ENCODE measurements at regions of chr1 and their contacts with region 1.

Region 1: GRCh38 chr1:235415008-235415904 is 48.0 kb downstream of the TBCE start:
- DNase-seq: peak; percentile 85
- ATAC-seq: peak; percentile 89
- H3K4me3 ChIP-seq: no peak overlapping the region
- H3K27ac ChIP-seq: no peak overlapping the region
- H3K4me1 ChIP-seq: peaks cover 4% of the 10 kb centered on the region; the same call in 1 of the 2 replicates
- H3K27me3 ChIP-seq: no peaks in the 10 kb centered on the region
- CTCF ChIP-seq: peak; percentile 77
- POLR2A ChIP-seq: no peak
- RAD21 ChIP-seq: peak; percentile 73

Region 2: DNA sequence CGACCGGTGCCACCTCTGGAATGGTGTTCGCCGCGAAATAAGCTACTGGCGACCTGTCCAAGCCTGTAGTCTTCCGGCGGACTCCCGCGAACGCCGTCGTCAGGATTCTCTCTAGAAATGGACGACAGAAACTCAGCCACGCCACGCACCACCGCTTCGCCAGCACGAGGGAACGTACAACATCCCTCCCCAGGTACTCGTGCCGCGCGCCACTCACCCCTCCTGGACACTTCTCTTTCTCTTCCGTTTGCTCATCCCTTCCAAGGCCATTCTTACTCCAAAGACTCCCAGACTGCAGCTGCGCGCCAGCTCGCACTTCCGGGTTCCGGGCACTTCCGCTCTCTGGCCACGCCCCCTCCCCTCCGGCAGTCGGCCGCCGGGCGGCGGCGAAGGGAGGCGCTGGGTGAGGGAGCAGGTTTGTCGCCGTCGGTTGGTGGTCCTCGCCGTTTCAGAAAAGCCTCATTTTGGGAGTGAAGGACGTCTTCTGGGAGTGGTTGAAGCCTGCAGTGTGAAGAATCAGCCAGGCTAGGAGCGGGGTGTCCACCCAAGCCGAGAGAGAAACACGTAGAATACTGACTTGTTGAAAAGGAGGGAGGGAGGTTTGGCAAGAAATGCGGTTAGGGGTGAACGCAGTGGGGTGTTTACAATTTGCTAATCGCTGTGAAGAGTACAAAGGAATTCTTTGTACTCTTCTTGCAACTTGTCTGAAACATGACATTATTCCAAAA is 254.1 kb before region 1 on chr1 and contains the start of gene RBM34:
- CTCF ChIA-PET with region 1: interaction called, 6 read pairs
- POLR2A ChIA-PET with region 1: no interaction called
- dilution Hi-C with region 1: no loop called
- in situ Hi-C with region 1: no loop called
- intact Hi-C with region 1: loop called (anchors 5 kb)
- DNase-seq: peak; percentile 88
- ATAC-seq: peak; percentile 98
- H3K4me3 ChIP-seq: peak within 1 kb of the TSS; percentile 88
- H3K27ac ChIP-seq: peak within 1 kb of the TSS; percentile 96
- H3K4me1 ChIP-seq: peaks cover 2% of the 10 kb centered on the region
- H3K27me3 ChIP-seq: no peaks in the 10 kb centered on the region
- CTCF ChIP-seq: peak; percentile 28; the same call in 1 of the 2 replicates
- POLR2A ChIP-seq: peak; percentile 93
- RAD21 ChIP-seq: no peak
- total RNA-seq, gene RBM34: 28.7 and 61.7 TPM in 2 replicates

Region 3: DNA sequence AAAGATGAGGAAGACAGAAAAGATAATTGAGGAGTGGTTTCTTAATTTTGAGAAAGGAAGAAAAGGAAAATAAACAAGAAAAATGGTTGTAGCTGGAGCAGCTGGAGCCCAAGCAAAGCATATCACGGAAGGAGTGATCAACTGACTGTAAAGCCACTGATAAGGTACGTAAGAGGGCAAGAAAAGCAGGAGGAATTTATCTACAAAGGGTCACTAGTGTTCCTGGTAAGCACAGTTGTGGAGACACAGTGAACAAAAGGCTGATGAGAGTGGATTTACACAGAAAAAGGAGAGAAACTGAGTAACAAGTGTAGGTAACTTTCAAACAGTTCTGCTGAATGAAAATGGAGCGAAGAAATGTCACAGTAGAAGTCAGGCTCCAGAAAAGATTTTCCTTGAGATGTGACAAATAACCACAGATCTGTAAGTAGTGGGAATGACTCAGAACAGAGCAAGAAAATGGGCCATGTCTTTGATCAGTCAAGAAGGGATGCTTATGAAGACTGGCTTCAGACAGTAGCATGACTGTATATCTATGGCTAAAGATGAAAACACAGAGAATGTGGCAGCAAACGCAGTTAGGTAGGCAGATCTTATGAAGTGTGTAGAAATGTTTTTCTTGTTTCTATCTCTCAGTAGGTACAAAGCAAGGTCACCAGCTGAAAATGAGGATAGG is 208.6 kb before region 1 on chr1:
- CTCF ChIA-PET with region 1: no interaction called
- POLR2A ChIA-PET with region 1: interaction called, 10 read pairs
- dilution Hi-C with region 1: no loop called
- in situ Hi-C with region 1: no loop called
- intact Hi-C with region 1: no loop called
- DNase-seq: peak; percentile 46
- ATAC-seq: no peak
- H3K4me3 ChIP-seq: no peak overlapping the region
- H3K27ac ChIP-seq: no peak overlapping the region
- H3K4me1 ChIP-seq: no peaks in the 10 kb centered on the region
- H3K27me3 ChIP-seq: no peaks in the 10 kb centered on the region
- CTCF ChIP-seq: no peak
- POLR2A ChIP-seq: no peak
- RAD21 ChIP-seq: no peak

Region 4: DNA sequence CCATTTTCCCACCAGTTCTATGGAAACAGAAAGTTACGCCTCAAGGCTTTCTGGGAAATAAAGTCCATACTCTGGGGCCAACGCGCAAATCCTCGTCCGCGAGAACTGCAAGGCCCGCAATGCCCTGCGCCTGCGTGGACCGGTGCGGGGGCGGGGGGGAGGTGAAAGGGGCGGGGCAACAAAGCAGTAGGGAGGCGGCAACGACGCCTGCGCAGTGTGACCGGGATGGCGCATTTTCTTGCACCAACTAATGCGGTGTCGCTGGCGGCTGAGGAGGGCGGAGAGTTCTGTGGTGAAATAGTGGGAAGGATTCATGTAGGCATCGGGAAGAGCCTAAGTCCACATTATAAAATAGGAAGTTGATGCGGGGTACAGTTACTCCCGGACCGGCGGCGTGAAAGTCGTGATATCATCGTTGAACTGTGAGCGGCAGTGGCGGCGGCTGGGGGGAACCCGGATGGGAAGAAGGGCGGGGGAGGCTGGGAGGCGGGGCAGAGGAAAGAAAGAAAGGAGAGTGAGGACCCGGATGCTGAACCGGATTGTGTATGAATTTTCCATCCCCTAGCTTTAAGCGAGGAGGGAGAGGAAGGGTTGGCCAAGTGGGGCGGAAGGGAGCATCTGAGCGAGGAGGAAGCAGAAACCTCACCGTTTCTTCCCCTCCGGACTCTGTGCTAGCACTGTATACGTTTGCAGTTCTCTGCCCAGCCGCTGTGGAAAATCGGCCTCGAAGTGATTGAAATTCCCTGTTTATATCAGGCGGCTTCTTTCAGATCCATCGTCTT is 86.7 kb before region 1 on chr1 and contains the start of gene GGPS1:
- CTCF ChIA-PET with region 1: interaction called, 4 read pairs
- POLR2A ChIA-PET with region 1: no interaction called
- dilution Hi-C with region 1: no loop called
- in situ Hi-C with region 1: no loop called
- intact Hi-C with region 1: loop called (anchors 1 kb)
- DNase-seq: peak; percentile 100
- ATAC-seq: peak; percentile 84
- H3K4me3 ChIP-seq: peak within 1 kb of the TSS; percentile 78
- H3K27ac ChIP-seq: peak within 1 kb of the TSS; percentile 94
- H3K4me1 ChIP-seq: no peaks in the 10 kb centered on the region; the same call in 1 of the 2 replicates
- H3K27me3 ChIP-seq: no peaks in the 10 kb centered on the region
- CTCF ChIP-seq: peak; percentile 26; the same call in 1 of the 2 replicates
- POLR2A ChIP-seq: peak; percentile 87
- RAD21 ChIP-seq: no peak
- total RNA-seq, gene GGPS1: 21.5 and 23.1 TPM in 2 replicates

Region 5: DNA sequence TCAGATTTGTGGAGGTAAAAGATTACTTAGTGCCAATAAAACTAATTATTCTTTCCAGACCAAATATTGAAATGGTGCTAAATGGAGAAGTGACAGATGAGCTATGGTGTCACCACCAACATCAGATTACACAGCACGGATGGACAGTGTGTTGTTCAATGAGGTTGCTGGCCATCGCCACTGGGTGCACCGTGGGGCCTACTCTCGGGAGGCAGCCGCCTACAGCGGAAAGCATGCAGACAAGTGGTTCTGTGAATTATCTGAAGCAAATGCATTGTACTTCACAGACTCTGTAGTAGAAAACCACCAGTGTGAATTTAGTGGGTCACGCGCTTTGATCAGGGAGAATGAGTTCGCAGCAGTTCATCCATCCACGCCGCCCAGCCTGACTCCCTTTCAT is 192.0 kb after region 1 on chr1:
- CTCF ChIA-PET with region 1: no interaction called
- POLR2A ChIA-PET with region 1: no interaction called
- dilution Hi-C with region 1: no loop called
- in situ Hi-C with region 1: no loop called
- intact Hi-C with region 1: no loop called
- DNase-seq: no peak
- ATAC-seq: no peak
- H3K4me3 ChIP-seq: no peak overlapping the region
- H3K27ac ChIP-seq: no peak overlapping the region
- H3K4me1 ChIP-seq: no peaks in the 10 kb centered on the region
- H3K27me3 ChIP-seq: no peaks in the 10 kb centered on the region; the same call in 1 of the 2 replicates
- CTCF ChIP-seq: no peak
- POLR2A ChIP-seq: no peak
- RAD21 ChIP-seq: no peak